ENCODE measurements at regions of chr21 and their contacts with region 1.

Region 1: GRCh38 chr21:14206222-14206621 is 4.5 kb downstream of the LIPI start:
- DNase-seq: no peak
- ATAC-seq: no peak
- H3K4me3 Mint-ChIP-seq: no peak overlapping the region
- H3K27ac Mint-ChIP-seq: no peak overlapping the region
- H3K4me1 Mint-ChIP-seq: no peaks in the 10 kb centered on the region
- H3K27me3 Mint-ChIP-seq: peaks cover 1% of the 10 kb centered on the region

Region 2: DNA sequence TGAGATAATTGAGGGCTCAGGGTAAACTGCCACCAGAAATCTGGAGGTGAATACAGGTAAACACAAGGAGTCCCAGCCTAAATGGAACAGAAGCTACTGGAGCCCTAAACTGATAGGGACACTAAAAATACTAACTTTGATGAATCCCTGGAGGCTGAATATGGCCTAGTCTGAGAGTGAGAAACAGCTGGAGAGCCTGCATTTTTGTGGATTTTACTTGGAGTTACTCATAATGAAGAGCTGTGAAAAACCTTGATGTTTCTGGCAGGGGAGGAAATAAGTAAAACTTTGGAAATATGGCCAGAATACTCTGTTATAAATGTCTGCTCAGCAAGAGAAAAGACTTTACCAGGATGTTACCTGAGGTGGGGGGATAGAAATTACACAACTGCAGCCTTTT is 159.8 kb before region 1 on chr21:
- CTCF ChIA-PET with region 1: no interaction called
- POLR2A ChIA-PET with region 1: no interaction called
- intact Hi-C with region 1: loop called in 1 of 2 experiments (anchors 10 kb)
- DNase-seq: no peak
- ATAC-seq: no peak
- H3K4me3 Mint-ChIP-seq: no peak overlapping the region
- H3K27ac Mint-ChIP-seq: no peak overlapping the region
- H3K4me1 Mint-ChIP-seq: peaks cover 8% of the 10 kb centered on the region
- H3K27me3 Mint-ChIP-seq: no peaks in the 10 kb centered on the region

Region 3: GRCh38 chr21:14270620-14271019 is 64.4 kb after region 1 on chr21:
- CTCF ChIA-PET with region 1: no interaction called
- POLR2A ChIA-PET with region 1: no interaction called
- intact Hi-C with region 1: no loop called
- DNase-seq: no peak
- ATAC-seq: no peak
- H3K4me3 Mint-ChIP-seq: no peak overlapping the region
- H3K27ac Mint-ChIP-seq: no peak overlapping the region
- H3K4me1 Mint-ChIP-seq: peaks cover 11% of the 10 kb centered on the region
- H3K27me3 Mint-ChIP-seq: peaks cover 32% of the 10 kb centered on the region

Region 4: DNA sequence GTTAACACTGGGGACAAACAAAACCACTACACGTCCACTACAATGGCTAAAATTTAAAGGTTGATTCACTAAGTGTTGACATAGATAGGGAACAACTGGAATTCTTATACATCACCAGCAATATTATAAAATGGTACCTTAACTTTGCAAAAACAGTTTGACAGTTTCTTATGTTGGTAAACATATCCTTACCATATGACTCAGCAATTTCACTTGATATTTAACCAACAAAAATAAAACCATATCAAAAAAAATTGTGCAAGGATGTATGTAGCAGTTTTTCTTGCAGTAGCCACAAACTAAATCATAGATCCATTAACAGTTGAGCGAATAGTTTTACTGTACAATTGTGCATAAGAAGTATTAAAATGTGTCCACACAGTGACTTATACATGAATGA is 182.1 kb after region 1 on chr21:
- CTCF ChIA-PET with region 1: no interaction called
- POLR2A ChIA-PET with region 1: no interaction called
- intact Hi-C with region 1: no loop called
- DNase-seq: no peak
- ATAC-seq: no peak
- H3K4me3 Mint-ChIP-seq: no peak overlapping the region
- H3K27ac Mint-ChIP-seq: no peak overlapping the region
- H3K4me1 Mint-ChIP-seq: peaks cover 6% of the 10 kb centered on the region
- H3K27me3 Mint-ChIP-seq: peaks cover 4% of the 10 kb centered on the region

Measured in activated CD4-positive, alpha-beta T cell treated with anti-CD3 and anti-CD28 coated beads for 36 hours (primary cell).